HCT116 (cell line): ENCODE measurements at regions of chr17 and their contacts with region 1.

Region 1: DNA sequence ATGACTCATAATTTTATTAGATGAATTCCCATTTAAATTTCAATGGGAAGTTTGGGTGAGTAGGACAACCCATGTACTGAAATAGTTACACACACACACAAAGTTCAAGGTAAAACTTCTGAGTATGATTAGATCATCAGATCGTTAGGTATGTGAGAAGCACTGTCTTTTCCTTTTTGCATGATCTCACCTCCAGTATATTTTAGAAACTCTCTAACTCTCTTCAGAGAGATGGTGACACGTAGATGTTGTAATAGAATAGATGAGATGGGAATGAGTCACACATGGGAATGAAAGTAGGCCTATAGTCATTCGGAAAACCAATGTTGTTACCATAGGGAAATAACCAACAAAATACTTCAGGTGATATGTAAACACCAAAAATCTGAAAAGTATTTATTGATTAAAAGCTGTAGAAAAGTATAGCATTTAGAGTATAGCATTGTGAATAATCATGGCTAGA is 22.2 kb downstream of the KRT23 start:
- DNase-seq: peak; percentile 92
- ATAC-seq: peak; percentile 83
- H3K4me3 ChIP-seq: no peak overlapping the region
- H3K27ac ChIP-seq: peak overlapping the region; percentile 90
- H3K4me1 ChIP-seq: peaks cover 50 to 65% of the 10 kb centered on the region in 2 experiments
- H3K27me3 ChIP-seq: no peaks in the 10 kb centered on the region
- CTCF ChIP-seq: no peak
- POLR2A ChIP-seq: no peak
- RAD21 ChIP-seq: peak; percentile 46

Region 2: DNA sequence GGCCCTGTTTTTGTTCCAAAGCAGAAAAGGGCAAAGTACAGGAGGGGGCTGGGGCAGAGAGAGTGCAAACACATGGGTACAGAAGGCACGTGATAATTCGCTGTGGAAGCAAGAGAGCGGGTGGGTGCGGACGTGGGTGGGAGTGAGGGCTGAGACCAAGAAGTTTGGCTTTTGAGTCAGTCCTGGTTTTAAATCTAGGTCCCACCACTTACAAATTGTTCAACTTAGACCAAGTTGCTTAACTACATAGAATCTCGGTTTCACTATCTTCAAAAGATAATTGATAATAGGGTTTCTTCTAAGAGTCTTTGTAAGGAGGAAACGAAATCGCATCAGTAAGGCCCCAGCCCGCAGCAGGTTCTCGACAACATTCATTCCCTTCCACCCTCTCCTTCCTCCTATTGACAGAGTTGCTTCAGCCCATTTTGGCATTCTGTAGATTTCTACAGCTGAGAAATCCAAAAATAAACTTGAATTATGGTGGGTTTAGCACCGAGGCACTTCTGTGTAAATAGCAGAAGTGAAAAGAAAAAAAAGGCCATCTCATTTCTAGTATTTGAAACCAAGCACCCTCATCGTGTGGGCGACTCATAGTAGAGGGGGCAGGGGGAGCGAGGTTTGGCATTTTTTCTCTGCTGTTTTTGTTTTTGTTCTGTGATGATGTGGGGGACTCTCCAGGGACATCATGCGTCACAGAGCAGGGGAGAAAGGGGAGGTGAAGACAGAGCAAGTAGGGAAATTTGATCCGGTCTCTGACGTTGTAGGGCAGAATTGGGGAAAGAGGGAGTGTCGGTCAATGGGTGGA is 316.4 kb before region 1 on chr17:
- CTCF ChIA-PET with region 1: no interaction called
- POLR2A ChIA-PET with region 1: no interaction called
- RAD21 ChIA-PET with region 1: no interaction called
- intact Hi-C with region 1: no loop called
- DNase-seq: no peak
- ATAC-seq: no peak
- H3K4me3 ChIP-seq: no peak overlapping the region
- H3K27ac ChIP-seq: no peak overlapping the region
- H3K4me1 ChIP-seq: peaks cover 8 to 14% of the 10 kb centered on the region in 2 experiments
- H3K27me3 ChIP-seq: no peaks in the 10 kb centered on the region
- CTCF ChIP-seq: no peak
- POLR2A ChIP-seq: no peak
- RAD21 ChIP-seq: no peak

Region 3: GRCh38 chr17:40956401-40957254 is 41.4 kb after region 1 on chr17:
- CTCF ChIA-PET with region 1: interaction called, 4 read pairs
- POLR2A ChIA-PET with region 1: interaction called, 4 read pairs
- RAD21 ChIA-PET with region 1: no interaction called
- intact Hi-C with region 1: loop called (anchors 2 kb)
- DNase-seq: peak; percentile 98
- ATAC-seq: peak; percentile 90
- H3K4me3 ChIP-seq: peak overlapping the region in 1 of 2 experiments; percentile 5; a peak in 2 of 4 replicates
- H3K27ac ChIP-seq: peak overlapping the region; percentile 99
- H3K4me1 ChIP-seq: peaks cover 86 to 88% of the 10 kb centered on the region in 2 experiments
- H3K27me3 ChIP-seq: no peaks in the 10 kb centered on the region
- CTCF ChIP-seq: no peak
- POLR2A ChIP-seq: no peak
- RAD21 ChIP-seq: peak; percentile 53